ENCODE measurements at regions of chr6 and their contacts with region 1.

Region 1: DNA sequence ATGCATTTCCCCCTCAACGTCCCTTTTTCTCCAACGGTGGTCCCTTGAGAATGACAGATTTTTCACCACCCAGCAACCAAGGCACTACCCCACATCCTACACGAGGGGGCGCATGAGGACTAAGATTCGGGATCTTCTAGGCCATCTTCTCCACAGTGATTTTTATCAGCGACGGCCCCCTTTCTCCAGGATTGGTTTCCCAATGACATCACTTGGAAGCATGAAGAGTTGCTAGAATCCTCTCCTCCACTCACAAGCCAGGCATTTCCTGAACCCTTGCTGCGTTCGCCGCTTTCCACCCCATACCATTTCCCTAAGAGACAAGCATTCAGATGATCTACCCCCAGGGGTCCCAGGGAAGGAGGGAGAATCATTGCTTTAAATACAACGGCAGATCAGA is 252.0 kb downstream of the HIVEP2 start:
- DNase-seq: peak; percentile 61
- H3K4me3 ChIP-seq: no peak overlapping the region; a peak in 1 of 4 replicates
- H3K27ac ChIP-seq: peak overlapping the region; percentile 53 to 60; a peak in 3 of 4 replicates
- H3K4me1 ChIP-seq: peaks cover 0 to 22% of the 10 kb centered on the region in 2 experiments; a peak in 2 of 4 replicates
- H3K27me3 ChIP-seq: no peaks in the 10 kb centered on the region
- CTCF ChIP-seq: peak; percentile 89
- EP300 ChIP-seq: no peak
- RAD21 ChIP-seq: peak; percentile 98

Region 2: DNA sequence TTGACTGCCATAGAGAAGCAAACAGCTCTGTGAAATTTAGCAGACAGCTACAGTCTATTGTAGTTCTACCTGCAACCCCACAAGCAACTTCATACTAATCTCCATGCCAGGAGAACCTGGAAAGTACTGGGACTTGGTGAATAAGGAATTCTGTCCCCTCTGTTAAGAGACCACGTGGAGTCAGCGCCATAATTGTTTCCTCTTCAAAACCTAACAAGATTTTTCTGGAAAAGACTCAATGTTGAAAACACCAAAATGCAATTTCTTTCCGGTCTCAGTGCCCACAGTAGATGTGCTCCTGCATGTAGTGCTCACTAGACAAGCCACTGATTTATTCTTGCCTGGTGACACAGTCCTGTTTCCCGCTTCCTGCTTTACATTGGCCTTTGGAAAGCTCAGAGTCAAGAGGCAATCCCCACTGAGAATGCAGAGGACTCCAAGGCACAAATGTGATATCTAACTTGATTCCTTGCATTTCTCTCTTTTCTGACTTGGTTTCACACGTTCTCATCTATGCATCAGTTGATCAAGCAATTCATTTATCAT is 16.2 kb before region 1 on chr6:
- CTCF ChIA-PET with region 1: interaction called, 10 read pairs
- POLR2A ChIA-PET with region 1: no interaction called
- DNase-seq: no peak
- H3K4me3 ChIP-seq: no peak overlapping the region
- H3K27ac ChIP-seq: no peak overlapping the region
- H3K4me1 ChIP-seq: no peaks in the 10 kb centered on the region
- H3K27me3 ChIP-seq: no peaks in the 10 kb centered on the region
- CTCF ChIP-seq: no peak
- EP300 ChIP-seq: no peak
- RAD21 ChIP-seq: no peak